OCI-LY7 (cell line): ENCODE measurements at regions of chr16 and their contacts with region 1.

Region 1: DNA sequence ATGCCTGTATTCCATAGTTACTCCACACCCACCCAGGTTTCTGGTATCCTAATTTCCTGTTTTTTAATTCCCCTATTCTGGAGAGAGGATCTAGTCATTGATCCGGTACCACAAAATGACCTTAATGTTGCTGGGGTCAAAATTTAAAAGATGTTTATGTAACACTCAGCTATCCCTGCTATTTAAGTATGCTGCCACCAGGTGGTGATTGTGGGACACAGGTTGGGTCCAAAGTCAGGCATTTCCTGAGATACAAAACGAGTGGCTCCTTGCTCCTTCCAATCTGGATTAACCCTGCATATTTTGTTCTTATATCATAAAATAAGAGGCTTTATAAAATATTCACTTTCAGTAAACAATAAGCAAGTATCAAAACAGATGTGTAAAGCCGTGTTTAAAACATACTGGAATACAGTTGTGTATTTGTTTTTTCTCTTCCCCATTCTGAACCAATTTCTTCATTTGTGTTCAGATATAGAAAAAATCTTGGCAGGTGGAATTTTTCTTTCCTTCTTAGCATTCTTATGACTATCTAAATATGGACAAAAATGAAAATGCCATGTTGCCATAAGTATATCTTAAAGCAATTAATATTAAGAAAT is 16.3 kb downstream of the HS3ST4 start:
- DNase-seq: peak; percentile 49
- H3K4me3 ChIP-seq: no peak overlapping the region
- H3K27ac ChIP-seq: no peak overlapping the region
- H3K4me1 ChIP-seq: no peaks in the 10 kb centered on the region
- CTCF ChIP-seq: peak; percentile 81

Region 2: DNA sequence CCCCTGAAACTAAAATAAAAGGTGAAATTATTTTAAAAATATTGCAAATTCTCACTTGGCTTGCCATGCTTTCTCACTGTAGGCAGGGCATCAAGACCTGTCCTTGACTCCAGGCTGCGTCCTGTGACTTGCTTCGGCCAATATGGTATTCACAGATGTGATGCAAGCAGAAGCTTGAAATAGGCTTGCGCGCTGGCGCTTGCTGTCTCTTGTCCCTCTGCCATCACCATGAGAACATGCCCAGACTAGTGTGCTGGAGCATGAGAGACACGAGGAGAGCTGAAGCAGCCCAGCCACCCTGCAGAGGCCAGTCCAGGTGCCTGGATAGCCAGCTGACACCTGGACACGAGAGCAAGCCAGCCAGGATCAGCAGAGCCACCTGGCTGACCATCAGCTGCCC is 428.6 kb before region 1 on chr16:
- CTCF ChIA-PET with region 1: no interaction called
- POLR2A ChIA-PET with region 1: no interaction called
- intact Hi-C with region 1: loop called (anchors 5 kb)
- DNase-seq: no peak
- H3K4me3 ChIP-seq: no peak overlapping the region
- H3K27ac ChIP-seq: no peak overlapping the region
- H3K4me1 ChIP-seq: no peaks in the 10 kb centered on the region
- CTCF ChIP-seq: no peak

Region 3: GRCh38 chr16:25633549-25633948 is 74.5 kb before region 1 on chr16:
- CTCF ChIA-PET with region 1: no interaction called
- POLR2A ChIA-PET with region 1: no interaction called
- intact Hi-C with region 1: loop called (anchors 2 kb)
- DNase-seq: no peak
- H3K4me3 ChIP-seq: no peak overlapping the region
- H3K27ac ChIP-seq: no peak overlapping the region
- H3K4me1 ChIP-seq: no peaks in the 10 kb centered on the region
- CTCF ChIP-seq: no peak

Region 4: GRCh38 chr16:25823891-25824290 is 115.8 kb after region 1 on chr16:
- CTCF ChIA-PET with region 1: no interaction called
- POLR2A ChIA-PET with region 1: no interaction called
- intact Hi-C with region 1: no loop called
- DNase-seq: no peak
- H3K4me3 ChIP-seq: no peak overlapping the region
- H3K27ac ChIP-seq: no peak overlapping the region
- H3K4me1 ChIP-seq: no peaks in the 10 kb centered on the region
- CTCF ChIP-seq: no peak